GM12878 (cell line): ENCODE measurements at regions of chr16 and their contacts with region 1.

Region 1: GRCh38 chr16:25270577-25270976 is 12.9 kb upstream of the ZKSCAN2 start:
- DNase-seq: no peak
- ATAC-seq: no peak
- H3K4me3 ChIP-seq: no peak overlapping the region
- H3K27ac ChIP-seq: no peak overlapping the region
- H3K4me1 ChIP-seq: no peaks in the 10 kb centered on the region
- H3K27me3 ChIP-seq: no peaks in the 10 kb centered on the region
- CTCF ChIP-seq: no peak
- EP300 ChIP-seq: no peak
- POLR2A ChIP-seq: no peak
- RAD21 ChIP-seq: no peak

Region 2: DNA sequence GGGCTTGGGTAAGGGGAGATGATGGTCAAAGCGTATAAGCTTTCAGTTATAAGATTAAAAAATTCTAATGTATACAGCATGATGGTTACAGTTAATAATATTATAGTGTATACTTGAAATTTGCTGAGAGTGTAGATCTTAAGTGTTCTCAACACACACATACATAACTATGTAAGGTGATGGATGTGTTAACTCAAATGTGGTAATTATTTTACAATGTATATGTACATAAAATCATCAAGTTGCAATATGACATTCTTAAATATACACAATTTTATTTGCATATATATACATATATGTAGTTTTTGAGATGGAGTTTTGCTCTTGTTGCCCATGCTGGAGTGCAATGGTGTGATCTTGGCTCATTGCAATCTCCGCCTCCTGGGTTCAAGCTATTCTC is 20.1 kb before region 1 on chr16:
- CTCF ChIA-PET with region 1: no interaction called
- POLR2A ChIA-PET with region 1: no interaction called
- RAD21 ChIA-PET with region 1: no interaction called
- SMC1A ChIA-PET with region 1: no interaction called
- in situ Hi-C with region 1: no loop called
- intact Hi-C with region 1: no loop called
- DNase-seq: no peak
- ATAC-seq: no peak
- H3K4me3 ChIP-seq: no peak overlapping the region
- H3K27ac ChIP-seq: no peak overlapping the region
- H3K4me1 ChIP-seq: no peaks in the 10 kb centered on the region
- H3K27me3 ChIP-seq: no peaks in the 10 kb centered on the region
- CTCF ChIP-seq: no peak
- EP300 ChIP-seq: no peak
- POLR2A ChIP-seq: no peak
- RAD21 ChIP-seq: no peak

Region 3: DNA sequence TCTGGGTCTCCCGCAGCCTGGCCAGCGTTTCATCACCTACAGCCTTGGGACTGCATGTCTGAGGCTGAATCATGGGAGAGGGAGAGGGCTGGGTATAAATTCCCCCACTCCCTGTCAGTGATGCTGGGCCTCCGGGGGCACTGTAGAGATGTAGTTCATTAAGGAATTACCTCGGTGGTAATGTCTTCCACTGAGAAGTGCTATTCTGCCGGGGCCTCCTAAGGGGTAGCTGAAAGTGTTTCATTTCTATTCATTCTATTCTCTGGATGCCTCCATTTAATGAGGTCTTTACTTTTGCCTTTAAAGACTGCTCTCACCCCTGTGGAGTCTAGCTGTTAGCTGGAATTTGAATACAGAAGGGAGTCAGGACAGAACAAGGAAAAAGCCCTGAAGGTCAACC is 304.8 kb after region 1 on chr16:
- CTCF ChIA-PET with region 1: no interaction called
- POLR2A ChIA-PET with region 1: no interaction called
- RAD21 ChIA-PET with region 1: no interaction called
- SMC1A ChIA-PET with region 1: no interaction called
- in situ Hi-C with region 1: no loop called
- intact Hi-C with region 1: no loop called
- DNase-seq: no peak
- ATAC-seq: no peak
- H3K4me3 ChIP-seq: no peak overlapping the region
- H3K27ac ChIP-seq: no peak overlapping the region
- H3K4me1 ChIP-seq: no peaks in the 10 kb centered on the region
- H3K27me3 ChIP-seq: no peaks in the 10 kb centered on the region
- CTCF ChIP-seq: no peak
- EP300 ChIP-seq: no peak
- POLR2A ChIP-seq: no peak
- RAD21 ChIP-seq: no peak

Region 4: GRCh38 chr16:25713785-25714580 is 443.4 kb after region 1 on chr16:
- CTCF ChIA-PET with region 1: no interaction called
- POLR2A ChIA-PET with region 1: no interaction called
- RAD21 ChIA-PET with region 1: no interaction called
- SMC1A ChIA-PET with region 1: interaction called, 3 read pairs
- in situ Hi-C with region 1: loop called (anchors 10 kb)
- intact Hi-C with region 1: no loop called
- DNase-seq: no peak
- ATAC-seq: no peak
- H3K4me3 ChIP-seq: no peak overlapping the region
- H3K27ac ChIP-seq: no peak overlapping the region
- H3K4me1 ChIP-seq: no peaks in the 10 kb centered on the region
- H3K27me3 ChIP-seq: no peaks in the 10 kb centered on the region
- CTCF ChIP-seq: no peak
- EP300 ChIP-seq: no peak
- POLR2A ChIP-seq: no peak
- RAD21 ChIP-seq: no peak

Region 5: DNA sequence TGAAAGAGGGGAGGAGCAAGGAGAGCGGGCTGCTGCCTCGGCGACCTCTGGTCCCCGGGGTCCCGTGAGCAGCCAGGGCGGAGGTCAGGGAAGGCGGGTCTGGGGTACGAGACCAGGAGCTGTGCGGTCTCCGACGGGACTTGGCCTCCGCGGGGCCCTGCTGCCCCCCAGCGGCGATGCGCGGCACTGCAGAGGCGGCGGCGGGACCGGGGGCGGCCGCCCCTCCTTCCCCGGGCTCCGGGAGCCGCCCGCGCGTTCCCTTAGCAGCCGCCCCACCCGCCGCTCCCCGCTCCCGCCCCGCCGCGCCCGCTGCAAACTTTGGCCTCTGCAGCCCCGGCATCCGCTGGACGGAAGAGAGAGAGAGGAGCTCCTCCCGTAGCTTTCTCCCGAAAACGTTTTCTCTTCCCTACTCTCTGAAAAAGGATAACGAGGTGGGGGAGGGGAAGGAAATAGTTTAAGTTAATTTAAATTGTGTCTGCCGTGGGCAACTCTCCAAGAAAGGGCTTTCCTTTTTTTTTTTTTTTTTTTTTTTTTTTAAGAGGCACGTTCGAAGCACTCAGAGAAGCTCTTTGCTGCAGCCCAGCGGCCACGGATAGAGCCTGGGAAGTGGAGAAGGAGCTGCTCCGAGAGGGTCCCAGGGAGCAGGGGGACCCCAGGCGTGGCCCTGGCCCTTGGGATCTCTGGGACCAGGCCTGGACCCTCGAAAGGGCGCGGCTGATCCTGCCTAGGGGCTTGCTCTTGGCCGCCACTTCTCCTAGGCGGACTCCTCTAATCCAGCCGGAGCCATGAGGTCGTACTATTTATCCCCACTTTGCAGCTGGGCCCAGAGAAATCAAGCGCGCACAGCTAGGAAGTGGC is 1839.3 kb after region 1 on chr16:
- CTCF ChIA-PET with region 1: no interaction called
- POLR2A ChIA-PET with region 1: no interaction called
- RAD21 ChIA-PET with region 1: no interaction called
- SMC1A ChIA-PET with region 1: no interaction called
- in situ Hi-C with region 1: loop called (anchors 10 kb)
- intact Hi-C with region 1: no loop called
- DNase-seq: no peak
- ATAC-seq: peak; percentile 83
- H3K4me3 ChIP-seq: no peak overlapping the region
- H3K27ac ChIP-seq: no peak overlapping the region
- H3K4me1 ChIP-seq: peaks cover 4% of the 10 kb centered on the region; the same call in 1 of the 2 replicates
- H3K27me3 ChIP-seq: peaks cover 0 to 2% of the 10 kb centered on the region in 2 experiments; a peak in 1 of 4 replicates
- CTCF ChIP-seq: peak; percentile 70 to 87 (median 82)
- EP300 ChIP-seq: no peak
- POLR2A ChIP-seq: no peak
- RAD21 ChIP-seq: peak; percentile 72